Naive thymus-derived CD4-positive, alpha-beta T cell (primary cell): ENCODE measurements at regions of chr12 and their contacts with region 1.

Region 1: GRCh38 chr12:50222275-50222795 is 55.2 kb upstream of the CERS5 start:
- DNase-seq: peak in 8 of 9 donors; percentile 17 to 47 (median 33)
- ATAC-seq: peak; percentile 48
- H3K4me3 ChIP-seq: peak overlapping the region; percentile 70
- H3K4me3 Mint-ChIP-seq: no peak overlapping the region
- H3K27ac ChIP-seq: peak overlapping the region; percentile 74
- H3K27ac Mint-ChIP-seq: no peak overlapping the region
- H3K4me1 ChIP-seq: peaks cover 11 to 23% of the 10 kb centered on the region in 2 donors
- H3K4me1 Mint-ChIP-seq: peaks cover 6 to 42% (median 33%) of the 10 kb centered on the region in 7 donors
- H3K27me3 ChIP-seq: no peaks in the 10 kb centered on the region
- H3K27me3 Mint-ChIP-seq: no peaks in the 10 kb centered on the region

Region 2: GRCh38 chr12:49983892-49984291 is 238.4 kb before region 1 on chr12:
- CTCF ChIA-PET with region 1: no interaction called
- POLR2A ChIA-PET with region 1: no interaction called
- intact Hi-C with region 1: no loop called
- DNase-seq: no peak
- ATAC-seq: peak; percentile 53
- H3K4me3 ChIP-seq: no peak overlapping the region
- H3K4me3 Mint-ChIP-seq: no peak overlapping the region
- H3K27ac ChIP-seq: no peak overlapping the region
- H3K27ac Mint-ChIP-seq: no peak overlapping the region
- H3K4me1 ChIP-seq: no peaks in the 10 kb centered on the region
- H3K4me1 Mint-ChIP-seq: peaks cover 0 to 5% (median 0%) of the 10 kb centered on the region in 7 donors
- H3K27me3 ChIP-seq: no peaks in the 10 kb centered on the region
- H3K27me3 Mint-ChIP-seq: no peaks in the 10 kb centered on the region

Region 3: GRCh38 chr12:50187084-50187900 is 35.0 kb before region 1 on chr12:
- CTCF ChIA-PET with region 1: interaction called, 4 read pairs
- POLR2A ChIA-PET with region 1: interaction called, 5 read pairs
- intact Hi-C with region 1: loop called in 1 of 2 experiments (anchors 2 kb)
- DNase-seq: peak in 1 of 9 donors; percentile 49
- ATAC-seq: peak; percentile 37
- H3K4me3 ChIP-seq: no peak overlapping the region
- H3K4me3 Mint-ChIP-seq: peak overlapping the region in 1 of 10 donors; percentile 70
- H3K27ac ChIP-seq: no peak overlapping the region
- H3K27ac Mint-ChIP-seq: peak overlapping the region in 6 of 9 donors; percentile 10 to 92 (median 71)
- H3K4me1 ChIP-seq: peaks cover 0 to 4% of the 10 kb centered on the region in 2 donors
- H3K4me1 Mint-ChIP-seq: peaks cover 12 to 57% (median 14%) of the 10 kb centered on the region in 7 donors
- H3K27me3 ChIP-seq: no peaks in the 10 kb centered on the region
- H3K27me3 Mint-ChIP-seq: no peaks in the 10 kb centered on the region

Region 4: DNA sequence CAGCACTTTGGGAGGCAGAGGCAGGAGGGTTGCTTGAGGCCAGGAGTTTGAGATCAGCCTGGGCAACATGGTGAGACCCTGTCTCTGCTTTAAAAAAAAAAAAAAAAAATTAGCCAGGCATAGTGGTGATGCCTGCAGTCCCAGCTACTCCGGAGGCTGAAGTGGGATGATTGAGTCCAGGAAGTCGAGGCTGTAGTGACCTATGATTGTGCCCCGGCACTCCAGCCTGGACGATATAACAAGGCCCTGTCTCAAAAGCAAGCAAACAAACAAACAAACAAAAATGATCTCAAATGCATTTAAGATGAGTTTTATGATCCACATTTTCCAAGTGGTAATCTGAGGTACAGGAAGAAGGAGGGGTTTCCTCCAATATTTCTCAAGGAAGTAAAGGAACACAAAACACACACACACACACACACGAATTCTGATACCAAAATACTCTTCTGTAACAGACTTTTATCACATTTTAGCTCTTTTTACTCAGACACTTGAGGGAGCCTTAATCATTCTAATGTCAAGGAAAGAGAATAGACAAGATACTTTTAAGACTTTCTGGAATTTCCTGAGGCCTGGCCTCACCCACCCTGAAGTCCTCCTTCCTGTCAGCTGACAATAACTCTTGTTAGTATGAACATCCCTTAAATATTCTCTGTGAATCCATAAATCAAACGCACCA is 10.8 kb before region 1 on chr12:
- CTCF ChIA-PET with region 1: interaction called, 17 read pairs
- POLR2A ChIA-PET with region 1: interaction called, 44 read pairs
- intact Hi-C with region 1: loop called in 1 of 2 experiments (anchors 1 kb)
- DNase-seq: peak in 1 of 9 donors; percentile 20
- ATAC-seq: no peak
- H3K4me3 ChIP-seq: peak overlapping the region; percentile 36
- H3K4me3 Mint-ChIP-seq: peak overlapping the region; percentile 69 to 86 (median 74)
- H3K27ac ChIP-seq: peak overlapping the region; percentile 65
- H3K27ac Mint-ChIP-seq: peak overlapping the region; percentile 86 to 98 (median 94)
- H3K4me1 ChIP-seq: peaks cover 15 to 35% of the 10 kb centered on the region in 2 donors
- H3K4me1 Mint-ChIP-seq: peaks cover 25 to 52% (median 44%) of the 10 kb centered on the region in 7 donors
- H3K27me3 ChIP-seq: no peaks in the 10 kb centered on the region
- H3K27me3 Mint-ChIP-seq: no peaks in the 10 kb centered on the region

Region 5: GRCh38 chr12:50257686-50258551 is 35.6 kb after region 1 on chr12:
- CTCF ChIA-PET with region 1: no interaction called
- POLR2A ChIA-PET with region 1: no interaction called
- intact Hi-C with region 1: loop called in 1 of 2 experiments (anchors 5 kb)
- DNase-seq: no peak
- ATAC-seq: no peak
- H3K4me3 ChIP-seq: no peak overlapping the region
- H3K4me3 Mint-ChIP-seq: no peak overlapping the region
- H3K27ac ChIP-seq: no peak overlapping the region
- H3K27ac Mint-ChIP-seq: peak overlapping the region in 1 of 9 donors; percentile 4
- H3K4me1 ChIP-seq: no peaks in the 10 kb centered on the region
- H3K4me1 Mint-ChIP-seq: peaks cover 0 to 7% (median 4%) of the 10 kb centered on the region in 7 donors
- H3K27me3 ChIP-seq: no peaks in the 10 kb centered on the region
- H3K27me3 Mint-ChIP-seq: peaks cover 0 to 4% (median 0%) of the 10 kb centered on the region in 5 donors

Region 6: DNA sequence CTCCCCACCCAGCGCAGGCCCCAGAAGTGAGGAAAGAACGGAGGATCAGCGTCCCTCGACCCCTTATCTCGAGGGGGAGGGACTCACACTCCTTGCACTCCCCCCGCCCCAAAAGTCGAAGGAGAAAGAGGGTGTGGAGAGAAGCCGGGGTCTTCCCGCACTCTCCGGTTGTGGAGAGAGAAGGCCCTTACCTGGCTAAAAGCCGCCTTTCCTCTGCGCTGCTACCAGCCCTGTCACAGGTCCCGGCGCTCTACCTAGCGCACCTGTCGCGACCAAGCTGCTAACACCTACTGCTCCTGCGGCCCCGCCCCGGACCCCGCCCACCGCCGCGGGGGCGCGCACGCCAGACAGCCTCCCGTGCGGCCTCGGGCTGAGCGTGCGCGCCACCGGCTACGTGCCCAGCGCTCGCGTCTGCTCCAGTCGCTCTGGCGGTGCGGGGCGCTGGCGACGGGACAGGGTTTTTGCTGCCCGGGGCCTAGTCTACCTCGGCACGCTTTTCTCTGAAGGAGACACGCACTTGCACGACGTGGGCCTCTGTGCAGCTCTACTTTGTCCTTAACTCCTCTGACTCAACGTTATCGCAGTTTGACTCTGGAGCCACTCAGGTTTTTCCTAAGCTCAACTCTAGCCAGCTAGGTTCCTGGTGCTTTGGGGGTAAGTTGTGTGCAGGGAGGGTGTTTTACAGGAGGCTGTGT is 61.0 kb after region 1 on chr12 and contains the start of gene LIMA1:
- CTCF ChIA-PET with region 1: no interaction called
- POLR2A ChIA-PET with region 1: interaction called, 11 read pairs
- intact Hi-C with region 1: loop called (anchors 1 kb)
- DNase-seq: peak; percentile 91 to 97 (median 94)
- ATAC-seq: peak; percentile 100
- H3K4me3 ChIP-seq: peak within 1 kb of the TSS; percentile 80
- H3K4me3 Mint-ChIP-seq: peak within 1 kb of the TSS; percentile 87 to 98 (median 94)
- H3K27ac ChIP-seq: peak within 1 kb of the TSS; percentile 90
- H3K27ac Mint-ChIP-seq: peak within 1 kb of the TSS; percentile 80 to 95 (median 88)
- H3K4me1 ChIP-seq: peaks cover 11 to 15% of the 10 kb centered on the region in 2 donors
- H3K4me1 Mint-ChIP-seq: peaks cover 8 to 32% (median 23%) of the 10 kb centered on the region in 7 donors
- H3K27me3 ChIP-seq: no peaks in the 10 kb centered on the region
- H3K27me3 Mint-ChIP-seq: peaks cover 0 to 27% (median 0%) of the 10 kb centered on the region in 5 donors
- total RNA-seq, gene LIMA1: 9.8 to 33.6 (median 11.2) TPM

Region 7: DNA sequence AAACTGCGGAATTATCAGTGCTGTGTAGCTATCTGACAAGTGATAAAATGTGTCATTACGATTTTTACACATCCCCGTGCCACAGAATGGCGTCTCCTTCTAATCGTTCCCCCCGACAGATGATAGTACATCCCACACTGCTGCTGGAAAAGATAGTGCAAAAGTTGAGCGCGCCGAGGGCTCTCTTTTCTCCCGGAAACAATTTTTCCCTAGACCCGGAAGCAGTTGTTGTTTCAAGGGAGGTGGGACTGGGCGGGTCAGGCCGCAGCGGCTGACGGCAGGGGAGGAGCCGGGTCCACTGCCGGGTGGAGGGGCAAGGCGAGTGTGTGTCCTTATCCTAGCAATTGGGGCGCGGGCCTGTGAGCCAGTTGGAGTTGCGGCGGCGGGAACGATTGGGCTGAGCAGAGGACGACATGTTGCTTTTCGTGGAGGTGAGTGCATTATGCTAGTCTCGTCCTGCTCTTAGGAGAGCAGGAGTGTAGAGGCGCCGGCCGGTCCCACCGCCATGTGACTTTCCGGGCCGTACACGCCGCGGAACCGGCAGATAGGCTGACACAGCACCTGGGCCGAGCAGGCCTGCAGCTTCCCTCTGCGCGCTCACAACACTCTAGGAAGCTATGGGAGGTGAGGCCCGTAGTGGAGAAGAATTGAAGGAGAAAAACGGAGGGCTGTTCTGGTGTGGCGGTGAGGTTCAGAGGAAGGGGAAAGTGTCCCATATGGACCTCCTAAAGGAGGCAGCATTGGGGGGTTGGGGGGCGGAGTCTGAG is 178.4 kb after region 1 on chr12 and contains the start of gene LARP4:
- CTCF ChIA-PET with region 1: no interaction called
- POLR2A ChIA-PET with region 1: no interaction called
- intact Hi-C with region 1: loop called (anchors 5 kb)
- DNase-seq: peak; percentile 70 to 92 (median 88)
- ATAC-seq: peak; percentile 98
- H3K4me3 ChIP-seq: peak within 1 kb of the TSS; percentile 66
- H3K4me3 Mint-ChIP-seq: peak within 1 kb of the TSS; percentile 81 to 100 (median 99)
- H3K27ac ChIP-seq: peak within 1 kb of the TSS; percentile 77
- H3K27ac Mint-ChIP-seq: peak within 1 kb of the TSS; percentile 86 to 97 (median 95)
- H3K4me1 ChIP-seq: peaks cover 9 to 12% of the 10 kb centered on the region in 2 donors
- H3K4me1 Mint-ChIP-seq: peaks cover 23 to 55% (median 37%) of the 10 kb centered on the region in 7 donors
- H3K27me3 ChIP-seq: no peaks in the 10 kb centered on the region
- H3K27me3 Mint-ChIP-seq: peaks cover 0 to 13% (median 6%) of the 10 kb centered on the region in 5 donors
- total RNA-seq, gene LARP4: 22.1 to 68.9 (median 38.4) TPM

Region 8: DNA sequence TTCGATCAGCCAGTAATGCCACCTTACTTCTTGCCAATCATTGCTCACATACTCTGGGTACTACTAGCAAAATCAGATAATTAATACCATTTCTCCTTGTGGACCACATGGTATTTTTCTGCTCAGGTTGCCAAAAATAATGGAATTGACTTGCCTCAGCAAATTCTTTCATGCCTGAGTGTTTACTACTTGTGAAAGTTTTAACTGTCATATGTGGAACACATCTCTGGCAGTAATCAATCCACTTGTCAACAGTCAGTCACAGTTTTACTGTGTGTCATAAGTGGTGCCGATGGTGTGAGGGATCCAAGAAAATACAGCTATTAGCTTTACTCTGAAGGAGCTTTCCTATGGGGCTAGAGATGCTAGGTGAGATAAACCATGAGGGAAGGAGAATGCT is 486.3 kb after region 1 on chr12:
- CTCF ChIA-PET with region 1: no interaction called
- POLR2A ChIA-PET with region 1: no interaction called
- intact Hi-C with region 1: no loop called
- DNase-seq: no peak
- ATAC-seq: no peak
- H3K4me3 ChIP-seq: no peak overlapping the region
- H3K4me3 Mint-ChIP-seq: no peak overlapping the region
- H3K27ac ChIP-seq: no peak overlapping the region
- H3K27ac Mint-ChIP-seq: peak overlapping the region in 1 of 9 donors; percentile 43
- H3K4me1 ChIP-seq: no peaks in the 10 kb centered on the region
- H3K4me1 Mint-ChIP-seq: no peaks in the 10 kb centered on the region
- H3K27me3 ChIP-seq: no peaks in the 10 kb centered on the region
- H3K27me3 Mint-ChIP-seq: no peaks in the 10 kb centered on the region